ENCODE measurements at regions of chr17 and their contacts with region 1.

Region 1: GRCh38 chr17:75855310-75856081 is at the start of gene WBP2:
- DNase-seq: peak; percentile 99
- ATAC-seq: peak; percentile 95
- H3K4me3 Mint-ChIP-seq: no peak within 1 kb of the TSS
- H3K27ac Mint-ChIP-seq: peak within 1 kb of the TSS; percentile 86
- H3K4me1 Mint-ChIP-seq: peaks cover 37% of the 10 kb centered on the region
- H3K27me3 Mint-ChIP-seq: no peaks in the 10 kb centered on the region
- total RNA-seq, gene WBP2: 68.7 to 74.1 TPM

Region 2: GRCh38 chr17:75405365-75406221 is 449.9 kb before region 1 on chr17 and contains the start of gene GRB2:
- CTCF ChIA-PET with region 1: no interaction called
- POLR2A ChIA-PET with region 1: no interaction called
- intact Hi-C with region 1: loop called in 1 of 2 experiments (anchors 1 kb)
- DNase-seq: peak; percentile 100
- ATAC-seq: peak; percentile 81
- H3K4me3 Mint-ChIP-seq: peak within 1 kb of the TSS; percentile 90
- H3K27ac Mint-ChIP-seq: peak within 1 kb of the TSS; percentile 96
- H3K4me1 Mint-ChIP-seq: peaks cover 35% of the 10 kb centered on the region
- H3K27me3 Mint-ChIP-seq: no peaks in the 10 kb centered on the region
- total RNA-seq, gene GRB2: 157 to 168 TPM

Region 3: DNA sequence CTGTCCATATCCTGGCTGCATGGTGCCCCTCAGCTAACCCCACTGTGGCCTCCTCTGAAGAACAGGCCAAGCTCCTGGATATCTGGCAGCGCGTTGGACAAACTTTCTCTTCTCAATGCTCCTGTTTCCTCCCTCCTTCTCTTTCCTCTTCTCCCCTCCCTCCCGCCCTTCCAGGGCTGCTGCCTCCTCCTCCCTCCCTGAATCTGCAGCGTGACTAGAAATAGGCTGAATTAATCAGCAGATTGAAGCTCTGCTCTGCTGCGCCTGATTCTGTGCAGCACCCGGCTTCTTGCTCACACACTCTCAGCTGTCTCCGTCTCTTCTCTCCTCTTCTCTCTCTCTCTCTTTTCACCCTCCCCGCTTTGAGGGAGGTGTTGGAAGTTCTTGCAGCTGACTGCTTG is 379.2 kb before region 1 on chr17:
- CTCF ChIA-PET with region 1: no interaction called
- POLR2A ChIA-PET with region 1: no interaction called
- intact Hi-C with region 1: no loop called
- DNase-seq: no peak
- ATAC-seq: no peak
- H3K4me3 Mint-ChIP-seq: no peak overlapping the region
- H3K27ac Mint-ChIP-seq: no peak overlapping the region
- H3K4me1 Mint-ChIP-seq: no peaks in the 10 kb centered on the region
- H3K27me3 Mint-ChIP-seq: no peaks in the 10 kb centered on the region

Region 4: DNA sequence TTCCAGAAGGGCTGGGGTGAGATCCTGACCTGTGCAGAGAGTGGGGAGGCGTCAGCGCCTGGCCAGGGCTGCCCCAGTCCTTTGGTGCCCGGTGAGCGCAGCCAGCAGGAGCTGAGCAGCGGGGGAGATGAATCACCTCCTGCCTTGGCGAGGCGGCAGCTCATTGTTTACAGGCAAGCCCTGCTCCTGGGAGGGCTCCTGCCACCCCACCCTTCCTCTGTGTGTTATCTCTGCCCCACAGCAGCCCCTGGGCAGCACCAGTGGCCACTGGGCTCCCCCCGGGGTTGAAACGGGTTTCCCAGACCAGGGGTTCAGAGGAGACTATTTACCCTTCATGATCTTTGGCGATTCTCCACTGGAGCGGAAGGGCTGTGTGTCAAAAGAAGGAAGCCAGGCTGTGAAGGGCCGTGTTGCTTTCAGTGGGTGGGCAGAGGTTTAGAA is 148.3 kb before region 1 on chr17:
- CTCF ChIA-PET with region 1: no interaction called
- POLR2A ChIA-PET with region 1: no interaction called
- intact Hi-C with region 1: no loop called
- DNase-seq: no peak
- ATAC-seq: no peak
- H3K4me3 Mint-ChIP-seq: no peak overlapping the region
- H3K27ac Mint-ChIP-seq: no peak overlapping the region
- H3K4me1 Mint-ChIP-seq: no peaks in the 10 kb centered on the region
- H3K27me3 Mint-ChIP-seq: no peaks in the 10 kb centered on the region

Region 5: DNA sequence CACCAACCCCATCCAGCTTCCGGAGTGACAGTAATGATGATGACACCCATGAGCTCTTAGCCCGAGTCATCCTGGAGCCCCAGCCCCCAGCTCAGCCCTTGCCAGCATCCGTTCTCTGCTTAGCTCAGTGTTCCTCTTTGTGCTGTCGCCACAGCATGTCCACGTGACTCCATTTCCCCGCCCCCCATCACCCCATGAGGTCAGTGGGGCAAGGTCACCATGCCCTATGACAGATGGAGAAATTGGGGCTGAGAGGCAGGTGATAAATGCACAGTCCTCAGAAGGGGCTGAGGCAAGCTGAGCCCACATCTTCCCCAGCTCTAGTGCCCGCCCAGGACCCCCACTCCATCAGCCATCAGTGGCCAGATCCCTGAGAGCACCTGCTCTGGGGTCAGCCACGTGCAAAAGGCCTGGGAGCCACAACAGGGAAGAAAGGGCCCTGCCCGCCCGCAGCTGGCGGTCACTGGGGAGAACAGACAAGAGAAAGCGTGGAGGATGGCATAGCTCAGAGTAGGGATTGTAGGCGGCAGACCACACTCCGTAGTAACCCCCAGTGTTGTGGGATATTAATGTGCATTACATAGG is 117.2 kb before region 1 on chr17:
- CTCF ChIA-PET with region 1: no interaction called
- POLR2A ChIA-PET with region 1: no interaction called
- intact Hi-C with region 1: no loop called
- DNase-seq: peak; percentile 61
- ATAC-seq: peak; percentile 91
- H3K4me3 Mint-ChIP-seq: no peak overlapping the region
- H3K27ac Mint-ChIP-seq: peak overlapping the region; percentile 55
- H3K4me1 Mint-ChIP-seq: peaks cover 6% of the 10 kb centered on the region
- H3K27me3 Mint-ChIP-seq: no peaks in the 10 kb centered on the region

Region 6: GRCh38 chr17:75764711-75765421 is 90.6 kb before region 1 on chr17 and contains the start of gene GALK1:
- CTCF ChIA-PET with region 1: interaction called, 8 read pairs
- POLR2A ChIA-PET with region 1: interaction called, 4 read pairs
- intact Hi-C with region 1: loop called in 1 of 2 experiments (anchors 1 kb)
- DNase-seq: peak; percentile 90
- ATAC-seq: peak; percentile 95
- H3K4me3 Mint-ChIP-seq: peak within 1 kb of the TSS; percentile 80
- H3K27ac Mint-ChIP-seq: peak within 1 kb of the TSS; percentile 83
- H3K4me1 Mint-ChIP-seq: peaks cover 3% of the 10 kb centered on the region
- H3K27me3 Mint-ChIP-seq: no peaks in the 10 kb centered on the region
- total RNA-seq, gene GALK1: 50.3 to 63.2 TPM

Region 7: DNA sequence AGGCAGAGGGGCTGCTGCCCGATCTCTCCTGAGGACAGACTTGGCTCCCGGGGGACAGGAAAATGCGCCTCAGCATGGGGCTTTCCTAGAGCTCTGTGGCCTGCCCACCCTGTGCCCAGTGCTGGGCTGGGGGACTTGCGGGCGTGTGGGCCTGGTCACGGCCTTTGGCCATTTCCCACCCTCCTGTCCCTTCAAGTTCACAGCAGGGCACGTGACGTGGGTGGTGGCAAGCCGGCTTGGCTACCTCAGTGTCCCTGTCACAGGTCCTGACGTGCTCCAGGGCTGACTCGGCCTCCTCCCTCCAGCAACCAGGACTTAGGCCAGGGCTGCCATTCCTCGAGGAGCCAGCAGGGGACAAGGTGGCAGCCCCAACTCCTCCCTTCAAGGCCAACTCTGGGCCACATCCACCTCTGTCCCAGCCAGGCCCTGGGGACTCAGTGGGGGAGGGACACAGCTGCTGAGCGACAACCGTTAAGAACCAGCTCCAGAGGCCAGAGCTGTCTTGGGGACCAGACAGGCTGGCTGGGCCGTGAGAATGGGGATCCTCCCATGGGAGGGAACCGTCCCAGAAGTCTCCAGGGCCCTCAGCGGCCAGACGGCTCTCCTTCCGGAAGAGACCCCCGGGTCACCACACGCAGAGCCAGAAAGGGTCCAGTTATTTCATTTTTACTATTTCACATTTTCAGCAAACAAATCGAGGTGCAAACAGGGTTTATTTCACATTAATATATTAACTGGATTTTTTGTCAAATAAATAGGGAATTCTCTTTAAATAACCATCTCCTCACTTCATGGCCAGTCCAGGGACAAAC is 10.2 kb before region 1 on chr17:
- CTCF ChIA-PET with region 1: interaction called, 42 read pairs
- POLR2A ChIA-PET with region 1: interaction called, 10 read pairs
- intact Hi-C with region 1: loop called in 1 of 2 experiments (anchors 1 kb)
- DNase-seq: peak; percentile 85
- ATAC-seq: peak; percentile 71
- H3K4me3 Mint-ChIP-seq: peak overlapping the region; percentile 55
- H3K27ac Mint-ChIP-seq: peak overlapping the region; percentile 60
- H3K4me1 Mint-ChIP-seq: peaks cover 14% of the 10 kb centered on the region
- H3K27me3 Mint-ChIP-seq: no peaks in the 10 kb centered on the region

Region 8: DNA sequence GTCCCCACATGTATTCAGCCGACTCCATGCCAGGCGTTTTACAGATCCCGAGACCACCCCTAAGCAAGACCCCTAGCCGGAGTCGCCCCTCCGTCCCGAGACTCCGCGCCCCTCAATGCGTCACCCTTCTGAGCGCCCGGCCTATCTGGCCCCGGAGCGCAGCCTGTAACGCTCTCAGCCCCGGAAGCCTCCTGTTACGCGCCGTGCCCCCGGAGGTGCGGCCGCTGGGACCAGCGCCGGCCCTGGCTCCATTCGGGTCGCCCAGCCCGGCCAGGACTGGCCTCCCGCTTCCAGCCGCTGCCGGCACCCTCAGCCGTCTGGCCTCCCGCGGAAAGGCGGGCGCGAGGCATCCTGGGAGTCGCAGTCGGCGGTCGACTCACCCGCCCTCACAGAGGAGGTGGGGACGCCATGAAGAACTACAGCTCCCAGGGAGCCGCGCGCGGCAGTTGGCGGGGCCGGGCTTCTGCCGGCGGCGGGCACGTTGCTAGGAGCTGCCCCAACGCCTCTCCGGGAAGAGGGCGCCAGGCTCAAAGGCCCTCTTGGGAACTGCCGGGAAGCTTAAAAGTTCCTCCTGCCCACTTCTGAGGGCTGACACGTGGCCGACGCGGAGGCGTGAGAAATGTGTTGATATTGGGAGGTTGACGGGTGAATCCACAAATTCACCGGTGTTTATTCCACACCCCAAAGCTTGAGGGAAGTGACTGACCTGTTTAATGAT is 85.4 kb after region 1 on chr17 and contains the start of gene FBF1:
- CTCF ChIA-PET with region 1: interaction called, 4 read pairs
- POLR2A ChIA-PET with region 1: no interaction called
- intact Hi-C with region 1: loop called in 1 of 2 experiments (anchors 1 kb)
- DNase-seq: peak; percentile 94
- ATAC-seq: peak; percentile 100
- H3K4me3 Mint-ChIP-seq: peak within 1 kb of the TSS; percentile 92
- H3K27ac Mint-ChIP-seq: peak within 1 kb of the TSS; percentile 82
- H3K4me1 Mint-ChIP-seq: peaks cover 13% of the 10 kb centered on the region
- H3K27me3 Mint-ChIP-seq: no peaks in the 10 kb centered on the region
- total RNA-seq, gene FBF1: 16.2 to 18.0 TPM

Region 9: GRCh38 chr17:75987007-75987406 is 131.5 kb after region 1 on chr17:
- CTCF ChIA-PET with region 1: no interaction called
- POLR2A ChIA-PET with region 1: no interaction called
- intact Hi-C with region 1: no loop called
- DNase-seq: no peak
- ATAC-seq: no peak
- H3K4me3 Mint-ChIP-seq: no peak overlapping the region
- H3K27ac Mint-ChIP-seq: no peak overlapping the region
- H3K4me1 Mint-ChIP-seq: peaks cover 3% of the 10 kb centered on the region
- H3K27me3 Mint-ChIP-seq: no peaks in the 10 kb centered on the region

Region 10: GRCh38 chr17:76384222-76384986 is 528.9 kb after region 1 on chr17 and contains the start of gene SPHK1:
- CTCF ChIA-PET with region 1: interaction called, 3 read pairs
- POLR2A ChIA-PET with region 1: no interaction called
- intact Hi-C with region 1: loop called in 1 of 2 experiments (anchors 5 kb)
- DNase-seq: peak; percentile 86
- ATAC-seq: peak; percentile 72
- H3K4me3 Mint-ChIP-seq: peak within 1 kb of the TSS; percentile 85
- H3K27ac Mint-ChIP-seq: peak within 1 kb of the TSS; percentile 81
- H3K4me1 Mint-ChIP-seq: peaks cover 12% of the 10 kb centered on the region
- H3K27me3 Mint-ChIP-seq: no peaks in the 10 kb centered on the region
- total RNA-seq, gene SPHK1: 7.4 to 11.7 TPM